Tibial artery (tissue), 4 donors: ENCODE measurements at regions of chr6 and their contacts with region 1.

Region 1: GRCh38 chr6:111483736-111484632 is 966 bp upstream of the REV3L start:
- DNase-seq: peak; percentile 99
- H3K4me3 ChIP-seq: peak overlapping the region; percentile 62 to 99
- H3K27ac ChIP-seq: peak overlapping the region; percentile 97 to 100
- H3K4me1 ChIP-seq: peaks cover 0 to 55% (median 14%) of the 10 kb centered on the region in 4 donors
- H3K27me3 ChIP-seq: no peaks in the 10 kb centered on the region
- CTCF ChIP-seq: no peak

Region 2: GRCh38 chr6:111199935-111200334 is 284.0 kb before region 1 on chr6:
- intact Hi-C with region 1: no loop called
- DNase-seq: no peak
- H3K4me3 ChIP-seq: no peak overlapping the region
- H3K27ac ChIP-seq: no peak overlapping the region
- H3K4me1 ChIP-seq: peaks cover 0 to 4% (median 0%) of the 10 kb centered on the region in 4 donors
- H3K27me3 ChIP-seq: no peaks in the 10 kb centered on the region
- CTCF ChIP-seq: no peak

Region 3: GRCh38 chr6:111552241-111552744 is 68.3 kb after region 1 on chr6:
- intact Hi-C with region 1: loop called (anchors 5 kb)
- DNase-seq: peak; percentile 75 to 89
- H3K4me3 ChIP-seq: peak overlapping the region; percentile 4 to 21
- H3K27ac ChIP-seq: peak overlapping the region; percentile 62 to 78
- H3K4me1 ChIP-seq: peaks cover 0 to 58% (median 30%) of the 10 kb centered on the region in 4 donors
- H3K27me3 ChIP-seq: no peaks in the 10 kb centered on the region
- CTCF ChIP-seq: no peak